ENCODE measurements at regions of chr2 and their contacts with region 1.

Region 1: DNA sequence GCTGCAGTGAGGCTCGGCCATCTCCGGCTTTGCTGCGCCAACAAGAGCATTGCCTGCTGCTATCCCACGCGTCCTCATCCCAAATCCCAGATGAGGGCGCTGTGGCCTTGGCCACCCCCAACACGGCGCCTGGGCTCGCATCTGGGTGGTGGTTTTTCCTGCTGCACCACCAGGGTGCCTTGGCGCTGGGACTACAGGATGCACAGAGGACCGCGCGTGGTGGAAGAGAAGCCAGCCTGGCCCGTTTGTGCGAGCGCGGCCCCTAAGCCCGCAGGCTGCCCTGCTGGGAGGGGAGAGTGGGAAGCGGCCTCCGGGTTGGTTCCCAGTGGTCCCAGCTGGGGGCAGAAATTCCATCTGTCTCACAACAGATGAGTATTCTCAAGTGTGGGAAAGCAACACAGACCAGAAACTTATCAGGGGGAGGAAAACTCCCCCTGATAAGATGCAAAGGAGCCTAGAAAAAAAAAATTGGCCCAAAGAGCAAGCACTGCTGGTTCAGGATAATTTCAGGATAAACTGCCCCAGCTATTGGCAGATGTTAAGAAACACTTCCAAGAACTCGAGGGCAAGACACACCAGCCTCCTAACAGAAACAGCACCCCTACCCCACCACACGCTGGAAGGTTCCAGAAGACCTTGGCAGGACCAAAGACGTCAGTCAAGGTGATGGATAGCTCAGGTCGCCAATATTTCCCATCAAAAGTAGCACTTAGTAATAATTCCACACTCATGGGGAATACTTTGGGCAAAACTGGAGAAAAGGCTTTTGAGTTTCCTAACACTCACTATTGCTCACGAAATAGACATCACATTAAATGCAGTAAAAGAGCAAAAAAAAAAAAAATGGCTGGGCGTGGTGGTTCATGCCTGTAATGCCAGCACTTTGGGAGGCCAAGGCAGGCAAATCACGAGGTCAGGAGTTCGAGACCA is 152.1 kb downstream of the PXDN start:
- DNase-seq: peak; percentile 39

Region 2: GRCh38 chr2:1653956-1654695 is 61.9 kb after region 1 on chr2:
- intact Hi-C with region 1: loop called (anchors 5 kb)
- DNase-seq: no peak

Region 3: GRCh38 chr2:1817256-1818051 is 225.2 kb after region 1 on chr2:
- intact Hi-C with region 1: loop called (anchors 5 kb)
- DNase-seq: peak; percentile 92